ENCODE measurements at regions of chr20 and their contacts with region 1.

Region 1: GRCh38 chr20:49219089-49219923 is at the start of gene DDX27:
- DNase-seq: peak; percentile 98
- H3K4me3 Mint-ChIP-seq: peak within 1 kb of the TSS; percentile 94
- H3K27ac Mint-ChIP-seq: peak within 1 kb of the TSS; percentile 95
- H3K4me1 Mint-ChIP-seq: peaks cover 25% of the 10 kb centered on the region
- H3K27me3 Mint-ChIP-seq: no peaks in the 10 kb centered on the region
- total RNA-seq, gene DDX27: 40.6 to 41.2 TPM

Region 2: GRCh38 chr20:49028684-49029083 is 190.6 kb before region 1 on chr20:
- CTCF ChIA-PET with region 1: no interaction called
- intact Hi-C with region 1: loop called (anchors 2 kb)
- DNase-seq: no peak
- H3K4me3 Mint-ChIP-seq: no peak overlapping the region
- H3K27ac Mint-ChIP-seq: no peak overlapping the region
- H3K4me1 Mint-ChIP-seq: no peaks in the 10 kb centered on the region
- H3K27me3 Mint-ChIP-seq: no peaks in the 10 kb centered on the region

Region 3: GRCh38 chr20:49100972-49101371 is 118.3 kb before region 1 on chr20:
- CTCF ChIA-PET with region 1: interaction called, 12 read pairs
- intact Hi-C with region 1: no loop called
- DNase-seq: no peak
- H3K4me3 Mint-ChIP-seq: no peak overlapping the region
- H3K27ac Mint-ChIP-seq: peak overlapping the region; percentile 68
- H3K4me1 Mint-ChIP-seq: peaks cover 8% of the 10 kb centered on the region
- H3K27me3 Mint-ChIP-seq: no peaks in the 10 kb centered on the region

Region 4: GRCh38 chr20:49161428-49162152 is 57.7 kb before region 1 on chr20:
- CTCF ChIA-PET with region 1: interaction called, 20 read pairs
- intact Hi-C with region 1: loop called (anchors 2 kb)
- DNase-seq: no peak
- H3K4me3 Mint-ChIP-seq: no peak overlapping the region
- H3K27ac Mint-ChIP-seq: no peak overlapping the region
- H3K4me1 Mint-ChIP-seq: peaks cover 58% of the 10 kb centered on the region
- H3K27me3 Mint-ChIP-seq: no peaks in the 10 kb centered on the region

Region 5: GRCh38 chr20:49186535-49187329 is 32.6 kb before region 1 on chr20:
- CTCF ChIA-PET with region 1: interaction called, 12 read pairs
- intact Hi-C with region 1: loop called (anchors 1 kb)
- DNase-seq: peak; percentile 84
- H3K4me3 Mint-ChIP-seq: peak overlapping the region; percentile 82
- H3K27ac Mint-ChIP-seq: peak overlapping the region; percentile 90
- H3K4me1 Mint-ChIP-seq: peaks cover 49% of the 10 kb centered on the region
- H3K27me3 Mint-ChIP-seq: no peaks in the 10 kb centered on the region

Region 6: GRCh38 chr20:49245921-49246740 is 26.8 kb after region 1 on chr20:
- CTCF ChIA-PET with region 1: interaction called, 10 read pairs
- intact Hi-C with region 1: no loop called
- DNase-seq: peak; percentile 48
- H3K4me3 Mint-ChIP-seq: no peak overlapping the region
- H3K27ac Mint-ChIP-seq: peak overlapping the region; percentile 58
- H3K4me1 Mint-ChIP-seq: peaks cover 4% of the 10 kb centered on the region
- H3K27me3 Mint-ChIP-seq: no peaks in the 10 kb centered on the region

Region 7: GRCh38 chr20:49261173-49261572 is 41.9 kb after region 1 on chr20:
- CTCF ChIA-PET with region 1: no interaction called
- intact Hi-C with region 1: no loop called
- DNase-seq: no peak
- H3K4me3 Mint-ChIP-seq: no peak overlapping the region
- H3K27ac Mint-ChIP-seq: peak overlapping the region; percentile 5
- H3K4me1 Mint-ChIP-seq: peaks cover 26% of the 10 kb centered on the region
- H3K27me3 Mint-ChIP-seq: no peaks in the 10 kb centered on the region